HCT116 (cell line): ENCODE measurements at regions of chr14 and their contacts with region 1.

Region 1: GRCh38 chr14:66507722-66508546 is at the start of gene GPHN:
- DNase-seq: peak; percentile 98
- ATAC-seq: peak; percentile 97
- H3K4me3 ChIP-seq: peak within 1 kb of the TSS; percentile 82 to 92
- H3K27ac ChIP-seq: peak within 1 kb of the TSS; percentile 96
- H3K4me1 ChIP-seq: peaks cover 11 to 21% of the 10 kb centered on the region in 2 experiments; a peak in 2 of 4 replicates
- H3K27me3 ChIP-seq: no peaks in the 10 kb centered on the region
- CTCF ChIP-seq: peak in 1 of 3 experiments; percentile 21; a peak in 1 of 6 replicates
- POLR2A ChIP-seq: peak; percentile 92
- RAD21 ChIP-seq: no peak
- total RNA-seq, gene GPHN: 43.8 TPM

Region 2: DNA sequence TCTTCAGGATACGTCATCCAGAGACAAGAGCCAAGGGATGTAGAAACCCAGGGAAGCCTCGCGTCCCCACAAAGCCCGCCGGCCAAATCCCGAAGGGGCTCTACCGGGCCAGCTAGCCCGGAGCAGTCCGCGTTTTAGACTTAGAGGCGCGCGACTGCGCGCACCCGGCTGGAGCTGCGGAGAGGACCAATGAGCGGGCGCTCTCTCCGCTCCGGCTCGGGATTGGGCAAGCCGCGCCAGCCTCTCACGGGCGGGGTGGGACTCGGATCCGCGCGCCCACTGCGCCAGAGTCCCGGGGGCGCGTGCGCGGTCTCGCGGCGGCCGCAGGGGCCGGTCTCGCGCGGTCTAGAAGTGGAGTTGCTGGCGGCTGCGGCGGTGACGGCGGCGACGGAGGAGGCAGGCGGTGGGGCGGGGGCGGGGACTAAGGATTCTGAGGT is 733.1 kb after region 1 on chr14:
- CTCF ChIA-PET with region 1: no interaction called
- POLR2A ChIA-PET with region 1: no interaction called
- RAD21 ChIA-PET with region 1: no interaction called
- intact Hi-C with region 1: loop called (anchors 5 kb)
- DNase-seq: peak; percentile 90
- ATAC-seq: peak; percentile 91
- H3K4me3 ChIP-seq: peak overlapping the region; percentile 58 to 70
- H3K27ac ChIP-seq: peak overlapping the region; percentile 91
- H3K4me1 ChIP-seq: peaks cover 15 to 22% of the 10 kb centered on the region in 2 experiments; a peak in 3 of 4 replicates
- H3K27me3 ChIP-seq: no peaks in the 10 kb centered on the region
- CTCF ChIP-seq: no peak
- POLR2A ChIP-seq: no peak
- RAD21 ChIP-seq: no peak